Activated B cell treated with CpG ODN at 0.5 μM for 24 hours (primary cell): ENCODE measurements at regions of chr12 and their contacts with region 1.

Region 1: GRCh38 chr12:128829861-128830504 is 6.2 kb upstream of the SLC15A4 start:
- DNase-seq: peak; percentile 51
- ATAC-seq: peak; percentile 87
- H3K4me3 Mint-ChIP-seq: peak overlapping the region; percentile 73
- H3K27ac Mint-ChIP-seq: peak overlapping the region; percentile 94
- H3K4me1 Mint-ChIP-seq: peaks cover 36% of the 10 kb centered on the region
- H3K27me3 Mint-ChIP-seq: no peaks in the 10 kb centered on the region
- CTCF ChIP-seq: no peak

Region 2: GRCh38 chr12:128783129-128783574 is 46.8 kb before region 1 on chr12:
- CTCF ChIA-PET with region 1: interaction called, 6 read pairs
- POLR2A ChIA-PET with region 1: interaction called, 4 read pairs
- intact Hi-C with region 1: loop called (anchors 1 kb)
- DNase-seq: no peak
- ATAC-seq: peak; percentile 52
- H3K4me3 Mint-ChIP-seq: peak overlapping the region; percentile 56
- H3K27ac Mint-ChIP-seq: peak overlapping the region; percentile 64
- H3K4me1 Mint-ChIP-seq: peaks cover 30% of the 10 kb centered on the region
- H3K27me3 Mint-ChIP-seq: no peaks in the 10 kb centered on the region
- CTCF ChIP-seq: no peak

Region 3: DNA sequence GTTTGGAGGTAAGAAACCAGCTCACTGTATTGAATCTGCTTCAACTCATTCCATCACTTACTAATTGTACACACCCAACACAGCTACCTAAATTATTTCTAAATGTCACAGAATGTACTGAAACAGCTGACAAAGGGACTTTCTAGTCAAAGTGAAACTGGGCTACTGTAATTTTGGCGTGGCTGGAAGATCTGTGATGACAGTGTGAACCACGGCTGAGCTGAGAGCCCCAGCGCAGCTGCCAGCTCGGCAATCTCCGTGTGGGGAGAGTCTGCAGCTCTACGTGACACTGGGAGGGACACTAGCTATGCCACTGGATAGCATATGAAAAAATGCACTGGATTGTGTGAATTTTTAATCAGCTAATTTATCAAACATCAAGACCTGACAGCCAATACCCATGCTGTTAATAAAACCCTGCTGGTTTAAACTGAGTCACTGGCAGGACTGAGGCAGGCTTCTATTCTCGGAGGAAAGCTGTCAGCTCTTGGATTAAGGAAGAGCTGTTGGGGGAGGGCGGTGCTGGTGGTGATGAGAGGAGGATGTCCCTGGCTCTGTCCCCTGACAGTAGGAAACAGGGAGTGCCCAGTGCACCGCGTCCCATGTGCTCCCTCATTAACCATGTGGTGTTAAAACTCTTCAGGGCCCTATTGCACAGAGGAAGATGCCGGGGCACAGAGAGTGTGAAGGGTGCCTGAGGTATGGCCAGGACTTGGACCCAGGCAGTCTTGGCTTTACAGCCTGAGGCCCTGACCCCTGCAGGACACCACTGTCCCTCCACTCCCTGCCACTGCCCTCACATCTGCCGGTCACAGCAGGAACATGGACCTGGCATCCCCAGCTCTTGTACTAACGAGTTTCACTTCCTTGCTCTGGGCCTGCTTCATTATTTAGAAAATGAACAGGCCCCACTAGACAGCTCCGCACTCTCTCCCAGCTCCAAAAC is 19.5 kb before region 1 on chr12:
- CTCF ChIA-PET with region 1: interaction called, 6 read pairs
- POLR2A ChIA-PET with region 1: interaction called, 42 read pairs
- intact Hi-C with region 1: loop called (anchors 1 kb)
- DNase-seq: no peak
- ATAC-seq: peak; percentile 88
- H3K4me3 Mint-ChIP-seq: peak overlapping the region; percentile 58
- H3K27ac Mint-ChIP-seq: peak overlapping the region; percentile 87
- H3K4me1 Mint-ChIP-seq: peaks cover 67% of the 10 kb centered on the region
- H3K27me3 Mint-ChIP-seq: no peaks in the 10 kb centered on the region
- CTCF ChIP-seq: no peak

Region 4: GRCh38 chr12:128817111-128818015 is 12.6 kb before region 1 on chr12:
- CTCF ChIA-PET with region 1: interaction called, 6 read pairs
- POLR2A ChIA-PET with region 1: interaction called, 45 read pairs
- intact Hi-C with region 1: loop called (anchors 1 kb)
- DNase-seq: no peak
- ATAC-seq: no peak
- H3K4me3 Mint-ChIP-seq: peak overlapping the region; percentile 57
- H3K27ac Mint-ChIP-seq: peak overlapping the region; percentile 80
- H3K4me1 Mint-ChIP-seq: peaks cover 93% of the 10 kb centered on the region
- H3K27me3 Mint-ChIP-seq: no peaks in the 10 kb centered on the region
- CTCF ChIP-seq: no peak

Region 5: DNA sequence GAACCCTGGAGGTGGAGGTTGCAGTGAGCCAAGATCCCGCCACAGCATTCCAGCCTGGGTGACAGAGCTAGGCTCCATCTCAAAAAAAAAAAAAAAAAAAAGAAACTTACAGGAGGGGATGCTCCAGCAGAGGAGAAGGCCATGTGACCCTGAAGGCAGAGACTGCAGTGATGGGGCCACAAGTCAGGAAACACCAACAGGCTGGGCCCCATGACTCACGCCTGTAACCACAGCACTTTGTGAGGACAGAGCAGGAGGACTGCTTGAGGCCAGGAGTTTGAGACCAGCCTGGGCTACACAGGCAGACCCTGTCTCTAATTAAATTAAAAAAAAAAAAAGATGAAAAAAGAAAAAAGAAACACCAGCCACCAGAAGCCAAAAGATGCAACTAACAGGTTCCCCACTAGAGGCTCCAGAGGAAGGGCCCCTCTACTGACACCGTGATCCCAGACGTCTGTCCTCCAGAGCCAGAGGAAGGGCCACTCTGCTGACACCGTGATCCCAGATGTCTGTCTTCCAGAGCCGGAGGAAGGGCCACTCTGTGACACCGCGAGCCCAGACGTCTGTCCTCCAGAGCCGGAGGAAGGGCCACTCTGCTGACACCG is 14.2 kb after region 1 on chr12:
- CTCF ChIA-PET with region 1: no interaction called
- POLR2A ChIA-PET with region 1: interaction called, 17 read pairs
- intact Hi-C with region 1: loop called (anchors 1 kb)
- DNase-seq: no peak
- ATAC-seq: peak; percentile 43
- H3K4me3 Mint-ChIP-seq: no peak overlapping the region
- H3K27ac Mint-ChIP-seq: no peak overlapping the region
- H3K4me1 Mint-ChIP-seq: peaks cover 24% of the 10 kb centered on the region
- H3K27me3 Mint-ChIP-seq: no peaks in the 10 kb centered on the region
- CTCF ChIP-seq: no peak

Region 6: DNA sequence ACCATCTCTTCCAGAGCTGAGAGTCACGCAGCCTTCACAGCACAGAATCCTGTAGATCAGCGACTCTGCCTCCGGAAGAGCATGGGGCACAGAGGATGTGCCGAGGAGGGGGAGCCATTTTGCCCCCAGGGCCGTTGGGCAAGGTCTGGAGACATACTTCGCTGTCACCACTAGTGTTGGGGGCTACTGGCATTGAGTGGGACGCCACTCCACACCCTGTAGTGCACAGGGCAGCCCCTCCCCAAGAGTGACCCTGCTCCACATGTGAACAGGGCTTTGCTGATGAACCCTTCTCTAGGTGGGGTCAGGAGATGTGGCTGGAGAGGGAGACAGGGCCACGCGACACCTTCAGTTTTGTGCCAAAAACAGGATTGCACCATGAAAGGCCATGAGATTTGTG is 29.3 kb after region 1 on chr12:
- CTCF ChIA-PET with region 1: no interaction called
- POLR2A ChIA-PET with region 1: no interaction called
- intact Hi-C with region 1: no loop called
- DNase-seq: no peak
- ATAC-seq: no peak
- H3K4me3 Mint-ChIP-seq: no peak overlapping the region
- H3K27ac Mint-ChIP-seq: no peak overlapping the region
- H3K4me1 Mint-ChIP-seq: no peaks in the 10 kb centered on the region
- H3K27me3 Mint-ChIP-seq: peaks cover 28% of the 10 kb centered on the region
- CTCF ChIP-seq: no peak

Region 7: GRCh38 chr12:128914908-128915563 is 85.1 kb after region 1 on chr12:
- CTCF ChIA-PET with region 1: no interaction called
- POLR2A ChIA-PET with region 1: interaction called, 5 read pairs
- intact Hi-C with region 1: loop called (anchors 1 kb)
- DNase-seq: no peak
- ATAC-seq: peak; percentile 75
- H3K4me3 Mint-ChIP-seq: no peak overlapping the region
- H3K27ac Mint-ChIP-seq: no peak overlapping the region
- H3K4me1 Mint-ChIP-seq: peaks cover 7% of the 10 kb centered on the region
- H3K27me3 Mint-ChIP-seq: peaks cover 2% of the 10 kb centered on the region
- CTCF ChIP-seq: no peak